ENCODE measurements at regions of chr10 and their contacts with region 1.

Region 1: DNA sequence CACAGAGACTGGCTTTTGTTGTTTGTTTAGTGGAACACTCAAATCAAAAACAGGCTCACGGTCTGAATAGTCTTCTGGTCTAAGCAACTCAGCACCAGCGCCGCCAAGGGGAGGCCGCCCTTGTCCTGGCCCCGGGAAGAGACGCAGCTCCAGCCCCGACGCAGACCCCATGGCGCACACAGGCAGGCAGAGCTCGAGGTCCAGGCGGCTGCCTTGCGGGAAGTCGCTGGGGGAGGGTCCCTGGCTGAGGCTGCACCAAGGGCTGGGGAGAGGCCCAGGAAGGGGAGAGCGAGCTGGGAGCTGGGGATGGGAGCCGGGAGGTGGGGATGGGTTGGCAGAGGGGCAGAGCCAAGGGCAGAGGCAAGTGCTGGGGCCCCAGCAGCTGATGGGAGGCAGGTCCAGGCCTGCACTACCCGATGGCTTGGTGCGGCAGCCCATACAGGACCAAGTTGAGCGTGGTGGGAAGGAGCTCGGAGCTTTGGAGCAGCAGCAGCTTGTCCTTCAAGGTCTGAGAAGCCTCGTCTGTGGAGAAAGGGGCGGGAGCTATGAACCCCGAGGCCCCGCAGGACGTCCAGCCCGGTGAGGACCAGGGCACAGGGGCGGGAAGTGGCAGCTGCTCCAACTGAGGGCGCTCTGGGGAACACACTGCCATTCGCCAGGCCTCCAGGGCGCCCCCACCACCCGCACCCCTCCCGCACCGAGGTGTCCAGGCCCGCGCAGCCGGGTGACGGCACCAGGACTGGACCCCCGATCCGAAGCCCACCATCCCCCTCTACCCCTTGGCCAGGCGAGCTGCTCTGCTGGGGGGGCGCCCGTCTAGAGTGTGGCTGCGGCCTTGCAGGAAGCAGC is 22.7 kb upstream of the NKX6-2 start:
- DNase-seq: no peak
- H3K4me3 ChIP-seq: no peak overlapping the region
- H3K27ac ChIP-seq: no peak overlapping the region
- H3K4me1 ChIP-seq: no peaks in the 10 kb centered on the region
- H3K27me3 ChIP-seq: no peaks in the 10 kb centered on the region
- CTCF ChIP-seq: no peak

Region 2: DNA sequence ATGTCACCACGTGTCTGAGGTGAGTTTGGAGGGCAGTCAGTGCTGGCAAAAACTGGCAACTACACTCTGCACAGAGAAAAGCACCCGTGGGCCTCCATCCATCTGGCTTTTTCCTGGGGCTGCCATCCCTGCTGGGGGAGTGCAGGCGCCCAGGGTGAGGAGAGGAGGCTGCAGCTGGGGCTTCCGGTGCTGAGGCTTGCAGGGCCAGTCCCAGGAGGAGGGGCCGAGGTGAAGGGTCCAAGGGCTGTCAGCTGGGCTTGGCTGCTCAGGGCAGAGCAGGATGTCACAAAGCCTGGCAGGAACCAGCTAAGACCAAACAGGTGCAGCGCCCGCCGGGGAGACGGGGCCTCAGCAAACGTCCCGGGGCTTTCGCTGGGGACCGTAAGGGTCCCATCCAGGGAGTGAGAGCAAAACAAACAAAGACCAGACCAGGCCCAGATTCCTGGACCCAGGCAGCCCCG is 56.6 kb after region 1 on chr10:
- CTCF ChIA-PET with region 1: no interaction called
- dilution Hi-C with region 1: no loop called
- in situ Hi-C with region 1: no loop called
- intact Hi-C with region 1: no loop called
- DNase-seq: no peak
- H3K4me3 ChIP-seq: no peak overlapping the region
- H3K27ac ChIP-seq: no peak overlapping the region
- H3K4me1 ChIP-seq: no peaks in the 10 kb centered on the region
- H3K27me3 ChIP-seq: peaks cover 4% of the 10 kb centered on the region
- CTCF ChIP-seq: no peak

Region 3: GRCh38 chr10:132879408-132880127 is 71.0 kb after region 1 on chr10:
- CTCF ChIA-PET with region 1: no interaction called
- dilution Hi-C with region 1: loop called (anchors 5 kb)
- in situ Hi-C with region 1: no loop called
- intact Hi-C with region 1: no loop called
- DNase-seq: no peak
- H3K4me3 ChIP-seq: no peak overlapping the region
- H3K27ac ChIP-seq: no peak overlapping the region
- H3K4me1 ChIP-seq: no peaks in the 10 kb centered on the region
- H3K27me3 ChIP-seq: no peaks in the 10 kb centered on the region
- CTCF ChIP-seq: no peak

Measured in mammary epithelial cell (primary cell).